Activated CD8-positive, alpha-beta T cell treated with anti-CD3 and anti-CD28 coated beads for 36 hours (primary cell): ENCODE measurements at regions of chr6 and their contacts with region 1.

Region 1: GRCh38 chr6:70955441-70956190 is 1.2 kb downstream of the B3GAT2 start:
- DNase-seq: peak; percentile 92
- ATAC-seq: peak; percentile 95
- H3K4me3 Mint-ChIP-seq: peak overlapping the region; percentile 70
- H3K27ac Mint-ChIP-seq: no peak overlapping the region
- H3K4me1 Mint-ChIP-seq: peaks cover 16% of the 10 kb centered on the region
- H3K27me3 Mint-ChIP-seq: peaks cover 62% of the 10 kb centered on the region
- CTCF ChIP-seq: peak; percentile 96

Region 2: DNA sequence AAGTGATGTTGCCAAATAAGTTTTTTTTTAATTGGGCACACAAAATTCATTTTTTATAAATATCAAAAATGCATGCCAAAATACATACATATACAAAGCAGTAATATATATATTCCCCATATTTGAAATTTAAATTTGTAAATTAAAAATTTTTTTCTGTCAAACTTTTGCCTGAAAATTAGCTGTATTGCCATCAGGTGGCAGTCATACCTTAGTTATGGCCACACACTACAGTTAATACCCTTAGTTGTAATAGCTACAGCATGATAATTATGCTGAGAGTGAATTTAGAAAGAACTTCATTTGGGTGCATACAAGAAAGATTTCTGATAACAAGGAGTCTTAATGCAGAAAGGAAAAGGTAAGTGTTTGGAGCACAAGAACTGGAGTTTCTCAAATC is 435.0 kb before region 1 on chr6:
- CTCF ChIA-PET with region 1: interaction called, 11 read pairs
- POLR2A ChIA-PET with region 1: no interaction called
- intact Hi-C with region 1: no loop called
- DNase-seq: no peak
- ATAC-seq: no peak
- H3K4me3 Mint-ChIP-seq: no peak overlapping the region
- H3K27ac Mint-ChIP-seq: no peak overlapping the region
- H3K4me1 Mint-ChIP-seq: peaks cover 4% of the 10 kb centered on the region
- H3K27me3 Mint-ChIP-seq: no peaks in the 10 kb centered on the region
- CTCF ChIP-seq: no peak

Region 3: GRCh38 chr6:70874181-70874913 is 81.3 kb before region 1 on chr6:
- CTCF ChIA-PET with region 1: no interaction called
- POLR2A ChIA-PET with region 1: no interaction called
- intact Hi-C with region 1: no loop called
- DNase-seq: no peak
- ATAC-seq: no peak
- H3K4me3 Mint-ChIP-seq: no peak overlapping the region
- H3K27ac Mint-ChIP-seq: no peak overlapping the region
- H3K4me1 Mint-ChIP-seq: no peaks in the 10 kb centered on the region
- H3K27me3 Mint-ChIP-seq: peaks cover 9% of the 10 kb centered on the region
- CTCF ChIP-seq: no peak

Region 4: DNA sequence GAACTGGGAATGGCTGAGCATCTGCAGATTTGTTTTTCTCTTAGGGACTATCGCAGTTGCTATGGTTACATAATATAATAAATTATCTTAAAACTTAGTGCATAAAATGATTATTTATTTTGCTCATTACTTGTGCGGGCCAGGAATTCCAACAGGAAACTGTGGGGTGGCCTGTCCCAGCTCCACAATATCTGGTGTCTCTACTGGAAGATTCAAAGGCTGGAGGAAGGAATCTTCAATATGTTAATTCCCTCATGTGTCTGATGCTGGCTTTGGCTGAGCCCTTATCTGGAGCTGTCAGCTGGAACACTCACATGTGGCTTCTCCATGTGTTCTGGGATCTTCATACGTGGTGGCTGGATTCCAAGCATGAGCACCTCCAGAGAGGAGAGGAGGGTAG is 25.1 kb after region 1 on chr6:
- CTCF ChIA-PET with region 1: no interaction called
- POLR2A ChIA-PET with region 1: no interaction called
- intact Hi-C with region 1: no loop called
- DNase-seq: no peak
- ATAC-seq: no peak
- H3K4me3 Mint-ChIP-seq: no peak overlapping the region
- H3K27ac Mint-ChIP-seq: no peak overlapping the region
- H3K4me1 Mint-ChIP-seq: no peaks in the 10 kb centered on the region
- H3K27me3 Mint-ChIP-seq: peaks cover 17% of the 10 kb centered on the region
- CTCF ChIP-seq: no peak